Activated naive CD4-positive, alpha-beta T cell treated with anti-CD3 and anti-CD28 coated beads for 36 hours (primary cell): ENCODE measurements at regions of chr22 and their contacts with region 1.

Region 1: GRCh38 chr22:39927544-39927943 is 26.7 kb downstream of the GRAP2 start:
- DNase-seq: peak; percentile 69
- H3K4me3 Mint-ChIP-seq: no peak overlapping the region
- H3K27ac Mint-ChIP-seq: no peak overlapping the region
- H3K4me1 Mint-ChIP-seq: peaks cover 33% of the 10 kb centered on the region
- H3K27me3 Mint-ChIP-seq: no peaks in the 10 kb centered on the region

Region 2: GRCh38 chr22:39832627-39833074 is 94.9 kb before region 1 on chr22:
- CTCF ChIA-PET with region 1: no interaction called
- intact Hi-C with region 1: no loop called
- DNase-seq: no peak
- H3K4me3 Mint-ChIP-seq: peak overlapping the region; percentile 33
- H3K27ac Mint-ChIP-seq: no peak overlapping the region
- H3K4me1 Mint-ChIP-seq: peaks cover 14% of the 10 kb centered on the region
- H3K27me3 Mint-ChIP-seq: no peaks in the 10 kb centered on the region

Region 3: DNA sequence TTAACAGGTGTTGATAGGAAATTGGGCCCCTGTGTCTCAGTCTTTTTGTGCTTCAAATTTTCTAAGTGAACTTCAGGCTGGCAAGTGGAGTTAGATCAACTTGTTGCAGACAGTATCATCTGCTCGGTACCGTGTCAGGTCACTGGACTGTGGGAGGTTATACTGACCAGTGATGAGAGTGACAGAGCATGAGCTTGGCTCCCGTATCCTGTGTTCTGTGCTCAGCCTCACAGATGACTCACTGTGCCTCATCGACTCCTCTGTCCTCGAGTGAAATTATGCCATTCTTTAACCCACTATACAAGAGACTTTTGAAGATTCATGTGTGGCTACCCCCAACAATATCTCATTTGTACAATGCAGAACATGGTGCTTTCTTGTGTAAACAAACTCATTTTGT is 18.8 kb before region 1 on chr22:
- CTCF ChIA-PET with region 1: interaction called, 9 read pairs
- intact Hi-C with region 1: loop called (anchors 2 kb)
- DNase-seq: peak; percentile 65
- H3K4me3 Mint-ChIP-seq: peak overlapping the region; percentile 90
- H3K27ac Mint-ChIP-seq: peak overlapping the region; percentile 100
- H3K4me1 Mint-ChIP-seq: peaks cover 57% of the 10 kb centered on the region
- H3K27me3 Mint-ChIP-seq: no peaks in the 10 kb centered on the region

Region 4: GRCh38 chr22:40965936-40966725 is 1038.6 kb after region 1 on chr22:
- CTCF ChIA-PET with region 1: no interaction called
- intact Hi-C with region 1: no loop called
- DNase-seq: no peak
- H3K4me3 Mint-ChIP-seq: no peak overlapping the region
- H3K27ac Mint-ChIP-seq: peak overlapping the region; percentile 58
- H3K4me1 Mint-ChIP-seq: peaks cover 8% of the 10 kb centered on the region
- H3K27me3 Mint-ChIP-seq: no peaks in the 10 kb centered on the region